BJ (cell line): ENCODE measurements at regions of chr6 and their contacts with region 1.

Region 1: DNA sequence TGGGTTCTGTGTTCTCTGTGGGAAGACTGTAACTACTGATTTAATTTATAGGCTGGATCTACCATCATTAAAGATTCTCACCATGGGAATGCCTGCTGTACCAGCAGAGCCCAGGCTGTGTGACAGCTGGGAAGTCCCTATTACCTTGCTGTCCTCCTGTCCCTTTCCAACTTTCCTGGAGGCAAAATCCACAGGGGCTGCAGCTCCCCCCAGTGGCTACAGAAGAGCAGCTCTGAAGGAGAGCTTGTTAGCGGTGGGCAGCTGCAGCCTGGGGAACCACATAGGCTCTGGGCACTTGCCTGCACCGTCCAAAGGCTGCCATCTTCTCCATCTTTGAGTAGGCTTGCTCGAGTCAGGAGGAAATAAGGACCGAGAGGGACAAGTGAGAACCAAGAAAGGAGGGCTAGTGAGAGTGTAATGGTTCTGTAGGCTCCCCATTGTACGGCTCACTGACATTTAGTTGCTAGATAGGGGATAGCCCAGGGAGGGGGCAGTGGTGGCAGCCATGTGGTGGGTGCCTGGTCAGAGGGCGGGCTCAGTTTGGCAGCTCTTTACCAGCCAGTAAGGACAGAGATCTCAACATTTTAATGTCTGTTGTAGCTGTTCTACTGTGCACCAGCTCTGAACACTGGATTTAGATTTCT is 155.1 kb upstream of the MLIP start:
- DNase-seq: no peak
- H3K4me3 ChIP-seq: no peak overlapping the region
- H3K27me3 ChIP-seq: peaks cover 3% of the 10 kb centered on the region; the same call in 1 of the 2 replicates
- CTCF ChIP-seq: peak; percentile 94

Region 2: DNA sequence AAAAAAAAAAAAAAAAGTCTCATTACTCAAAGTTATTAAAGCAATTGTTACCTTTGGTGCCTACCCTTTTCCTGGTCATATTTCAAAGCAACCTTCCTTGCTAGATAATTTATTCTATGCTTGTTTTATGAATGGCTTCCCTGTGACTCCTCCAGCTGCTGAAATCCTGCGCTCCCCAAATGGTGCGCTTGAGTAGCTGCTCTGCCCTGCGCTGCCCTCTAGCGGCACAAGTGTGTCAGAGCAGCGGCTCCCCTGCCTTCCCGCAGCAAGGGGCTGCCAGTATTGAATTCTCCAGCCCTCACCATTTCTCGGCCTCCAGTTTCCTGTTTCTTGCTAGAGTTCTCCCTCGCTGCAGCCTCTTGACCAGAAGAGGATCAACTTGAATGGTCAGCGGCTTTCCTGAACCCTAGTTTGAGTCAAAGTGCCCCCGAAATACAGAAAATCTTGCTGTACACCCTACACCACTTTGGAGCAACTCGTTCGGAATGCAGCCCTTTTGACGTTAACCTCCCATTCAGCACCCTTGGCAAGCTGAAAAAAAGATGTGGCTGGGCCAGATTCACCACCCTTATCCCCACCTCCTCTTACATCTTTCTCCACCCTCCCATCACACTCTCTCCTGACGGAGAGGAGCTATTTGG is 230.3 kb before region 1 on chr6:
- CTCF ChIA-PET with region 1: interaction called, 254 read pairs
- POLR2A ChIA-PET with region 1: no interaction called
- DNase-seq: no peak
- H3K4me3 ChIP-seq: no peak overlapping the region
- H3K27me3 ChIP-seq: no peaks in the 10 kb centered on the region; the same call in 1 of the 2 replicates
- CTCF ChIP-seq: peak; percentile 99

Region 3: DNA sequence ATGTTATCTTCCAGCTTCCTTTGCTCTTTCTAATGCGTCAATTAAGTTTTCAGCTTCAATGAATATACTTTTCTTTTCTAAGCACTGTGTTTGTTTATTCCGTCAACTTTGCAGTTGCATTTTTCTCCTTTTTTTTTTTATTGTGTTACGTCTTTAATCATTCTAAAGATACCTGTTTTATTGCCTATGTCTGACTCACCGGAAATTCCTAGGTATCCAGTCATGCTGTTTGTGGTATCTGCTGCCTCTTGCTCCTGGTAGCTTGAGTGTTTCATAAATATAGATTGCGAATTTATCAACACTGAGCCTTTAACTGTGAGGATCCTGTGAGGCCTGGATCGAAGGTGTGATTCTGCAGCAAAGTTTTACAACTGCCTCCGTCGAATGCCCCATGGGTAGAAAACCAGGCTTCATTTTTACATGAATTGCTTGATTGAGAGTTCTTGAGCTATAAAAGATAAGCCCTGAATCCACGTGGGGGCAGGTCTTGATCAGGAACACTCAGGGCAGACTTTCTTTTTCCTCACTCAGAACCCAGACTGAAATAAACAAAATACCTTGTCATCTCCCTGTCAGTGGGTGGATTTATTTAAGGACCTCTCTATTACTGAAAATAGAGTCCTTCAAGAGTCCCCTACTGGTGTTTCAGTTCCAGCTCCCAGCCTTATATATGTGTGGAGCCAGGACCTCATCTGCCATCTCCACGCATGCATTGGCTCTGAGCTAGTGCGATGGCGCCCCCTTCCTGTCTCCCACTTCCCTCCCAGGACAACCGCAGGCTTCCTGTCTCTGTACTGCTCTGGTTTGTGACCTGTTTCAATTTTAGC is 221.5 kb before region 1 on chr6:
- CTCF ChIA-PET with region 1: interaction called, 254 read pairs
- POLR2A ChIA-PET with region 1: no interaction called
- DNase-seq: peak; percentile 77
- H3K4me3 ChIP-seq: no peak overlapping the region
- H3K27me3 ChIP-seq: no peaks in the 10 kb centered on the region
- CTCF ChIP-seq: peak; percentile 42

Region 4: DNA sequence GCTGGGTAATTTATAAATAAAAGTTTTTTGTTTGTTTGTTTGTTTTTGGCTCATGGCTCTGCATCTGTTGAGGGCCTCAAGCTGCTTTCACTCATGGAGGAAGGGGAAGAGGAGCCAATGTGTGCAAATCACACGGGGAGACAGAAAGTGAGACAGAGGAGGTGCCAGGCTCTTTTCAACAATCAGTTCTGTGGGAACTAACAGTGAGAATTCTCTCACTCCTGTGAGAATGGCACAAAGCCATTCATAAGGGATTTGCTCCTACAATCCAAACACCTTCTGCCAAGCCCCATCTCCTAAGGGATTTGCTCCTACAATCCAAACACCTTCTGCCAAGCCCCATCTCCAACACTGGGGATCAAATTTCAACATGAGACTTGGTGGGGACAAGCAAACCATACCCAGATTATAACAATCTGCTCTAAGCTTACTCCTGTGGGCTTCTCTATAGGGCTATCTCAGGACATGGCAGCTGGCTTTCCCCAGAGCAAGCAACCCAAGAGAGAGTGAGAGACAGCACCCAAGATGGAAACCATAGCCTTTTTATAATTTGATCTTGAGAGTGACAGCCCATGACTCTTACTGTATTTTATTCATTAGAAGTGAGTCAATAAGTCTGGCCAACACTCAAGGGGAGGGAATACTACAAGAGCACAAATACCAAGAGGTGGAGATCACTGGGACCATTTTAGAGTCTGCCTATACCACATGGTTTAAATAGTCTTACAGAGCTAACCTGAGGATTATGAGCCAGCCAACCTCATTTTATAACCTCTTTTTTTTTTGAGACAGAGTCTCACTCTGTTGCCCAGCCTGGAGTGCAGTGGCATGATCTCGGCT is 184.2 kb before region 1 on chr6:
- CTCF ChIA-PET with region 1: interaction called, 16 read pairs
- POLR2A ChIA-PET with region 1: no interaction called
- DNase-seq: peak; percentile 63
- H3K4me3 ChIP-seq: no peak overlapping the region
- H3K27me3 ChIP-seq: no peaks in the 10 kb centered on the region
- CTCF ChIP-seq: no peak

Region 5: GRCh38 chr6:53794720-53795253 is 161.4 kb before region 1 on chr6 and contains the start of gene LRRC1:
- CTCF ChIA-PET with region 1: interaction called, 111 read pairs
- POLR2A ChIA-PET with region 1: interaction called, 5 read pairs
- DNase-seq: peak; percentile 36
- H3K4me3 ChIP-seq: peak within 1 kb of the TSS; percentile 62
- H3K27me3 ChIP-seq: no peaks in the 10 kb centered on the region
- CTCF ChIP-seq: no peak
- polyA plus RNA-seq, gene LRRC1: 4.3 and 4.7 TPM in 2 replicates

Region 6: GRCh38 chr6:53943395-53943794 is 12.8 kb before region 1 on chr6:
- CTCF ChIA-PET with region 1: interaction called, 30 read pairs
- POLR2A ChIA-PET with region 1: no interaction called
- DNase-seq: no peak
- H3K4me3 ChIP-seq: no peak overlapping the region
- H3K27me3 ChIP-seq: no peaks in the 10 kb centered on the region; the same call in 1 of the 2 replicates
- CTCF ChIP-seq: no peak

Region 7: DNA sequence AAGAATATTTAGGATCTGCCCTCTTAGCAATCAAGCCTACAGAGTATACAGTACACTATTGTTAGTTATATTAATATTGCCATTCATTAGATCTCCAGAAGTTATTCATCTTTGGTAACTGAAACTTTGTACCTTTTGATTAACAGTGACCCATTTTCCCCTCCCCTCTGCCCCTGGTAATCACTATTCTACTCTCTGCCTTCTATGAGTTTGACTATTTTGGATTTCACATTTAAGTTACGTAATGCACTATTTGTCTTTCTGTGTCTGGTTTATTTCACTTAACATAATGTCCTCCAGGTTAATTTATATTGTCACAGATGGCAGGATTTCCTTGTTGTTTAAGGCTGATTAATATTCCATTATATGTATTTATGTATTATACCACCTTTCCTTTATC is 266.0 kb after region 1 on chr6:
- CTCF ChIA-PET with region 1: no interaction called
- POLR2A ChIA-PET with region 1: no interaction called
- DNase-seq: no peak
- H3K4me3 ChIP-seq: no peak overlapping the region
- H3K27me3 ChIP-seq: no peaks in the 10 kb centered on the region
- CTCF ChIP-seq: no peak